ENCODE measurements at regions of chr11 and their contacts with region 1.

Region 1: DNA sequence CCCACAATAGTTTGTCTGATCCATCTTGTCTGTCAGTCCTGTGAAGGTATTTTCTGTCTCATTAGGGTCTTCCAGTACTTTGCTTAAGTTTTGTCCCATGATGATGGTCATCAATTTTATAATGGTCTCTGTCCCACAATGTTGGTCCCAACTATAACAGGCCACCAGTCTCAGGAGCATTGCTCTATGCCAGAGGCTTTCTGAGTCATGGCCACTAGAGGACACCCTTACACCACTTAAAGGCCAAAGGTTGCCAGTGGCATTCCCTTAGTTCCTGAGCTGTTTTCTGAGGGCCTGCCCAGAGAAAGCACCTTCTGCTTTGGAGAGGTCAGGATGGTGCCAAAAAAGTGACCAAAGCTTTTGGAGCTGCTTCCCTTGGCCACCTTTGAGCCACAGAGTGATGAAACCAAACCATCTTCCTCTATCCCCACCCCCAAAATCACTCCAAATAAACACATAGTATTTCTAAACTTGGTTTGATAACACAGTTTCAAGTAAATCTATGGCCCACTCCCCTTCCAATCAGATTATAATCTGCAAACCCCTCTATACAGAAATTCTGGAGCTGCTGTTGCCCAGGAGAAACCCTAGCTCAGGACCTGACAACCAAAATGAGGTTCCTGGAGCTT is 19.3 kb downstream of the EIF3F start:
- DNase-seq: peak in 1 of 2 donors; percentile 15
- ATAC-seq: peak; percentile 85 to 94 (median 88)
- H3K4me3 ChIP-seq: no peak overlapping the region
- H3K27ac ChIP-seq: no peak overlapping the region
- H3K4me1 ChIP-seq: no peaks in the 10 kb centered on the region
- H3K27me3 ChIP-seq: no peaks in the 10 kb centered on the region
- CTCF ChIP-seq: peak; percentile 84

Region 2: GRCh38 chr11:8092587-8093424 is 86.3 kb after region 1 on chr11:
- intact Hi-C with region 1: loop called (anchors 5 kb)
- DNase-seq: peak; percentile 56 to 69
- ATAC-seq: peak; percentile 61 to 75 (median 65)
- H3K4me3 ChIP-seq: no peak overlapping the region
- H3K27ac ChIP-seq: no peak overlapping the region
- H3K4me1 ChIP-seq: no peaks in the 10 kb centered on the region
- H3K27me3 ChIP-seq: no peaks in the 10 kb centered on the region
- CTCF ChIP-seq: peak; percentile 51

Region 3: DNA sequence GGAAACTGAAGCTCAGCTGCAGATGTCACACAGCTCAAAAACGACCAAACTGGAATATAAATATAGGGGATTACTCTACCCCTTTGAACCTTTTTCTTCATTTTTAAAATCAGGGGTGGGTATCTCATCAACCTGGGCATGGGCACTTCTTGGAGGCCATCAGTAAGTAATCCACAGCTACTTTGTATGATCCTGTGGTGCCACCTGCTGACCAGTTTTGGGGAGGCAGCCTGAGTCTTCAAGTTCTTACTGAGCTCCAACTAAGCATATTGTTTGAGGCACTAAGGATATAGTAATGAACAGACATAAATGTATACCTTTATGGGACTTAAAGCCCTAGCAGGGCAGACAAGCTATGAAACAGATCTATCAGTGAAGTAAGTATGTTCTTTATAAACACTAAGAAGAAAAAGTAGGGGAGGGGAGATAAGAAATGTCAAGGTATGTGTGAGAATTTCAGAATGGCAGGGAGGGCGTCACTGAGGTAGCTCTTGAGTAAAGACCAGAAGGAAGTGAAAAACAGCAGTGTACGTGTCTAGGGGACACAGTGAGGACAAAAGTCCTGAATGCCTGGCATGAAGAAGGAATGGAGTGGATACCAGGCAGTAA is 92.9 kb after region 1 on chr11:
- intact Hi-C with region 1: loop called (anchors 5 kb)
- DNase-seq: peak; percentile 77 to 85
- ATAC-seq: peak; percentile 73 to 91 (median 76)
- H3K4me3 ChIP-seq: no peak overlapping the region
- H3K27ac ChIP-seq: no peak overlapping the region
- H3K4me1 ChIP-seq: no peaks in the 10 kb centered on the region
- H3K27me3 ChIP-seq: no peaks in the 10 kb centered on the region
- CTCF ChIP-seq: peak; percentile 83

Region 4: DNA sequence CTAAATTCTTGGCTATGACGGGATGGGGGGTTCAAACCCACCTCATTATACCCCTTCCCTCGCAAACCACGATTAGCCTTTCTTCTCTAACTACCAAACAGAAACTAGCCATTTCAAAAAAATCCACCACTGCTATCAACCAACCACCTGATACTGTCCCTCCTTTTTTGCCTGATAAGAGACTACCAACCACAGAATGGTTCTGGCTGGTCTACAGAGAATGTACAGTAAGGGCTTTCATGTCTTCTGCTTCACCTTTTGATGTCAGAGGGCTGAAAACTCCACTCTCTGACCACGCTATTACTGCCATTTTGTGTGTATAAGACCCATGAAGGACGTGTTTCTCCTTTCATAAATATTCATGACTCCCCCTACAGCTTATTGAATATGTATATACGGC is 143.3 kb after region 1 on chr11:
- intact Hi-C with region 1: no loop called
- DNase-seq: no peak
- ATAC-seq: no peak
- H3K4me3 ChIP-seq: no peak overlapping the region
- H3K27ac ChIP-seq: no peak overlapping the region
- H3K4me1 ChIP-seq: peaks cover 4% of the 10 kb centered on the region
- H3K27me3 ChIP-seq: no peaks in the 10 kb centered on the region
- CTCF ChIP-seq: no peak

Measured in psoas muscle (tissue), 8 donors.